ENCODE measurements at regions of chr14 and their contacts with region 1.

Region 1: DNA sequence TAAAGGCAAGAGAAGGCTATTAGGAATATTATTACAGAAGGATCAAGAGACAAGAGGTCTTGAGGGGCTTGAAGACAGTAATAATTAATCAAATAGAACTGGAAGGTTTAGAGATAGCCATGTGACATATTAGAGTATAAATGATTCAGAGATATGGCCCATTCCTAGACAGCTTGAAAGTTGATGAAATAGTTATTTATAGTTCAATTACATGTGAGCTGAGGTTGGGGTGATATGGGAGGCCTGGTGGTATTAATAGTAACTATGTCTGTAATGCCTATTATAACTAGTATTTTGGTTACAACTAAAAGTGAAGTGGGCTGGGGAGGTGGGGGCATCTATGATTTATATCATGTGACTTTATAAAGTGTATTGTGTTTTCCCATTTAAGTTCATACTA is 14.1 kb upstream of the MIS18BP1 start:
- DNase-seq: no peak
- H3K4me3 Mint-ChIP-seq: no peak overlapping the region
- H3K27ac Mint-ChIP-seq: no peak overlapping the region
- H3K4me1 Mint-ChIP-seq: peaks cover 5% of the 10 kb centered on the region
- H3K27me3 Mint-ChIP-seq: peaks cover 15% of the 10 kb centered on the region

Region 2: DNA sequence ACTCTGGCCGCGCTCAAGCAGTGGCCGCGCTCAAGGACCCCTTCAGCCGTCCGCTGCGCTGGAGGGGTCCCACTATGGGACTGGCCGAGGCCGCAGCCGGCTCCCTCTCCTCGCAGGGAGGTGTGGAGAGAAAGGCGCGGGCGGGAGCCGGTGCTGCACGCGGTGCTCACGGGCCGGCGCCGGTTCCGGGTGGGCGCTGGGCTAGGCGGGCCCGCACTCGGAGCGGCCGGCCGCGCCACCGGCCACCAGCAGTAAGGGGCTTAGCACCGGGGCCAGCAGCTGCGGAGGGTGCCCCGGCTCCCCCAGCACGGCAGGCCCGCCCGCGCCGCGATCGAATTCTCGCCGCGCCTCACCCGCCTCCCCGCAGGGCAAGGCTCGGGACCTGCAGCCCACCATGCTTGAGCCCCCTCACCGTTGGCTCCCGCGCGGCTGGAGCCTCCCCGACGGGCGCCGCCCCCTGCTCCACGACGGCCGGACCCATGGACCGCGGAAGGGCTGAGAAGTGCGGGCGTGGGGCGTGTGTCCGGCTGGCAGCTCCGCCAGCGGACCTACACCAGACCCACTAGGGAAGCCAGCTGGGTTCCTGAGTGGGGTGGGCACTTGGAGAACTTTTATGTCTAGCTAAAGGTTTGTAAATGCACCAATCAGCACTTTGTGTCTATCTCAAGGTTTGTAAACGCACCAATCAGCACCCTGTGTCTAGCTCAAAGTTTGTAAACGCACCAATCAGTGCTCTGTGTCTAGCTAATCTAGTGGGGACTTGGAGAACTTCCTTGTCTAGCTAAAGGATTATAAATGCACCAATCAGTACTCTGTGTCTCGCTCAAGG is 354.8 kb before region 1 on chr14:
- intact Hi-C with region 1: loop called (anchors 2 kb)
- DNase-seq: no peak
- H3K4me3 Mint-ChIP-seq: peak overlapping the region; percentile 31
- H3K27ac Mint-ChIP-seq: no peak overlapping the region
- H3K4me1 Mint-ChIP-seq: no peaks in the 10 kb centered on the region
- H3K27me3 Mint-ChIP-seq: peaks cover 40% of the 10 kb centered on the region

Measured in activated CD4-positive, alpha-beta T cell treated with anti-CD3 and anti-CD28 coated beads, Interleukin-2, amount 10 ng/mL, durations not matched to agents 24 days and 14 days (primary cell).